AG04450 (cell line): ENCODE measurements at regions of chr20 and their contacts with region 1.

Region 1: DNA sequence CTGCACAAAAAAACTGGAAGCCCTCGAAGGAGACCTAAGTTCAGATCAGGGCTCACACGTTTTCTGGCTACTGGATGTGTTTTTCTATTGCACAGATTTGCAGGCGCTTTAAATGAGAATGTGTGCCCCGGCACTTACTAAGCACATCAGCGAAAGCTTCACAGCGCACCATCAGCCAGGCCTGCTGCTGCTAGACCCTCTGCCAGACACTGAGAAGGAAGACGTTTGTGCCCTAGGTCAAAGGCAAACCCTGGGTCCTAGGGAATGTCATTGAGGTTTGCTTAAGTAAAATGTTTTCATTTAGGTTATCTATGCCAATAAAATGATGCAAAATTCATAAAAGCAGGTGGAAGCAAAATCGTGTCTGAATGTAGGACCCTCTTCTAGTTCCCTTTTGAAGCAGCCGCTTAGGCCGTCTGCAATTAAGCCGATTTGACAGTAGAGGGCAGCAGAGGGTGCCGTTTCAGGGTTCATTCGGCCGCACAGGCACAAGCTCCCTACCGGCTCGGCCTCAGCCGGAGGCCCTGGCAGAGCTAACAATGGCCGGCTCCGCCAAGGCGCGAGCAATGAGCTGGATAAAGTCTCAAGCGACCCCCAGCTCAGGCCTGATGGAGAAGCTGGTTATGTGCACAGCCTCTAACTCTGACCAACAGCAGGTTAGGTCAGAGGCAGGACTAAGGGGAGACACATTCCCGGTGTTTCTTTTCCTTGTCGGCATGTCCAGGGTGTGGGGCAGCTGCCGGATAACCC is 107.2 kb upstream of the FOXA2 start:
- DNase-seq: peak; percentile 34
- H3K4me3 ChIP-seq: no peak overlapping the region
- H3K27ac ChIP-seq: no peak overlapping the region
- H3K27me3 ChIP-seq: no peaks in the 10 kb centered on the region
- CTCF ChIP-seq: peak; percentile 89

Region 2: DNA sequence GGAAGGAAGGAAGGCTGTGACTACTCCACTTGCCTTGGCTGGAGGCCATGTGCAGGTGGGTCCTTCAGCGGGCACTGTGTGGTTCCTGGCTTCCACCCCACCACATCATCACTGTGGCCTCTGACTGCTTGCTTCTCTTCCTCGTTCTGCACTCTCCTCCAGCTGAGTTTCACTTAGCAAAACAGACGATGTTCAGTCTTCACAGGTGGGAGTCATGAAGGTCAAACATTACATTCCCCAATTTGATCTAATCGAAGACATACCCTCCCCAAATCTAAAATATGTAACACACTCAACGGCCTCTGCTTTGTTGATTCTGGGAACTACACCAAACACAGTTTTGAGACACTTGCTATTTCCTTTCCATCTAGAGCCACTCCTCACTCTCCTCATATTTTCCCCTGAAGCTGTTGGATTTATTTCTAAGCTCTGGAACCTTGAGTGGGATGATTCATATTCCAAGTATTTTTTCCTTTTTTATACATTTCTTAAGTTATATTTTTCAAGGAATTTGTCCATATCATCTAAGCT is 25.3 kb after region 1 on chr20:
- CTCF ChIA-PET with region 1: interaction called, 17 read pairs
- POLR2A ChIA-PET with region 1: no interaction called
- DNase-seq: no peak
- H3K4me3 ChIP-seq: no peak overlapping the region
- H3K27ac ChIP-seq: no peak overlapping the region
- H3K27me3 ChIP-seq: no peaks in the 10 kb centered on the region
- CTCF ChIP-seq: no peak

Region 3: GRCh38 chr20:22974353-22974752 is 282.8 kb after region 1 on chr20:
- CTCF ChIA-PET with region 1: interaction called, 24 read pairs
- POLR2A ChIA-PET with region 1: no interaction called
- DNase-seq: no peak
- H3K4me3 ChIP-seq: no peak overlapping the region
- H3K27ac ChIP-seq: no peak overlapping the region
- H3K27me3 ChIP-seq: no peaks in the 10 kb centered on the region
- CTCF ChIP-seq: peak; percentile 39; the same call in 1 of the 2 replicates

Region 4: DNA sequence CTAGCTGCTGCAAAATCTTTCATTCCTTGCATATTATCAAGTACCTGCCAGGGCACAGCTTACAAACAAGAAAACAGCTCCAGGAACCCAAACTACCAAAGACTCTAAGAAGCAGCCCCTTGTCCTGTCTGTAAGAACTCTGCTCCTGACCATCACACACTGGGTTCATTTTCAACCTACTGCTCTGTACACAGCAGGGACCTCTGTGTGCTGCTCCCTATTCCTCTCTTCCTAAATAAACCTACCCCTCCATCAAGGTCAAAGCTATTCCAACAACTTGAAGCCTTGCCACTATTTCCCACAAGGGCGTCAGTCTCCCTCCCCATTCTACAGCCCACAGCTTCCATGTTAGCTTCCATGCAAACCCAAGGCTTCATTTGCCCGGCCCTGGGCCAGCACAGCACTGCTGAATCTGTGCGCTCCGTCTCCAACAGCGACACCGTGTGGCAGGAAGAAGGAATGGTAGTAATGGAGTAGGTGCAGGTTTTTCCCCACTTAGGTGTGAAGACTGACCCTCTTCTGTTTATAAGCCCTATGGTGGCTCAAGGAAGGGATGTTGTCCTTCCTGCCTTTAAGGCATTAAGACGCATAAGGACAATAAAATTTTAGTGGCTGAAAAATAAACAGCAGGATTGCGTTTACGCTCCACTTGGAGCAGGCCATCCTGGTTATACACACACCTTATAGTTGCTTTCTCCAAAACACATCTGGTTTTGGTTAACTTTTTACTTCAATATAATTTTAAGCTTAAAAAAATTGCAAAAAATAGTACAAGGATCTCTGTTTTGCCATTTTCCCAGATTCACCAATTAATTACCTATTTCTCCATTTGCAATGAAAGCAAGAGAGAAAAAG is 543.9 kb after region 1 on chr20:
- CTCF ChIA-PET with region 1: interaction called, 12 read pairs
- POLR2A ChIA-PET with region 1: no interaction called
- DNase-seq: no peak
- H3K4me3 ChIP-seq: no peak overlapping the region
- H3K27ac ChIP-seq: no peak overlapping the region
- H3K27me3 ChIP-seq: peaks cover 6% of the 10 kb centered on the region
- CTCF ChIP-seq: peak; percentile 77

Region 5: GRCh38 chr20:23340524-23340923 is 649.0 kb after region 1 on chr20:
- CTCF ChIA-PET with region 1: interaction called, 270 read pairs
- POLR2A ChIA-PET with region 1: interaction called, 3 read pairs
- DNase-seq: no peak
- H3K4me3 ChIP-seq: no peak overlapping the region
- H3K27ac ChIP-seq: no peak overlapping the region
- H3K27me3 ChIP-seq: peaks cover 2% of the 10 kb centered on the region
- CTCF ChIP-seq: peak; percentile 77